Caco-2 (cell line): ENCODE measurements at regions of chr7 and their contacts with region 1.

Region 1: GRCh38 chr7:48337012-48337621 is 165.9 kb downstream of the ABCA13 start:
- DNase-seq: peak in 1 of 2 experiments; percentile 33
- H3K4me3 ChIP-seq: no peak overlapping the region
- H3K4me3 Mint-ChIP-seq: no peak overlapping the region
- H3K27ac Mint-ChIP-seq: no peak overlapping the region
- H3K4me1 ChIP-seq: no peaks in the 10 kb centered on the region
- H3K4me1 Mint-ChIP-seq: no peaks in the 10 kb centered on the region
- H3K27me3 ChIP-seq: no peaks in the 10 kb centered on the region
- H3K27me3 Mint-ChIP-seq: peaks cover 14% of the 10 kb centered on the region
- CTCF ChIP-seq: peak; percentile 53 to 77

Region 2: GRCh38 chr7:48321319-48322010 is 15.7 kb before region 1 on chr7:
- CTCF ChIA-PET with region 1: no interaction called
- POLR2A ChIA-PET with region 1: no interaction called
- intact Hi-C with region 1: no loop called
- DNase-seq: no peak
- H3K4me3 ChIP-seq: no peak overlapping the region
- H3K4me3 Mint-ChIP-seq: no peak overlapping the region
- H3K27ac Mint-ChIP-seq: no peak overlapping the region
- H3K4me1 ChIP-seq: no peaks in the 10 kb centered on the region
- H3K4me1 Mint-ChIP-seq: no peaks in the 10 kb centered on the region
- H3K27me3 ChIP-seq: no peaks in the 10 kb centered on the region; the same call in 1 of the 2 replicates
- H3K27me3 Mint-ChIP-seq: peaks cover 6% of the 10 kb centered on the region
- CTCF ChIP-seq: no peak

Region 3: GRCh38 chr7:48411619-48412018 is 74.5 kb after region 1 on chr7:
- CTCF ChIA-PET with region 1: no interaction called
- POLR2A ChIA-PET with region 1: no interaction called
- intact Hi-C with region 1: loop called (anchors 10 kb)
- DNase-seq: no peak
- H3K4me3 ChIP-seq: no peak overlapping the region
- H3K4me3 Mint-ChIP-seq: no peak overlapping the region
- H3K27ac Mint-ChIP-seq: no peak overlapping the region
- H3K4me1 ChIP-seq: no peaks in the 10 kb centered on the region
- H3K4me1 Mint-ChIP-seq: no peaks in the 10 kb centered on the region
- H3K27me3 ChIP-seq: no peaks in the 10 kb centered on the region
- H3K27me3 Mint-ChIP-seq: peaks cover 22% of the 10 kb centered on the region
- CTCF ChIP-seq: no peak

Region 4: GRCh38 chr7:48528646-48529045 is 191.5 kb after region 1 on chr7:
- CTCF ChIA-PET with region 1: no interaction called
- POLR2A ChIA-PET with region 1: no interaction called
- intact Hi-C with region 1: loop called (anchors 1 kb)
- DNase-seq: peak; percentile 23 to 48
- H3K4me3 ChIP-seq: no peak overlapping the region
- H3K4me3 Mint-ChIP-seq: no peak overlapping the region
- H3K27ac Mint-ChIP-seq: no peak overlapping the region
- H3K4me1 ChIP-seq: no peaks in the 10 kb centered on the region
- H3K4me1 Mint-ChIP-seq: no peaks in the 10 kb centered on the region
- H3K27me3 ChIP-seq: no peaks in the 10 kb centered on the region
- H3K27me3 Mint-ChIP-seq: peaks cover 5% of the 10 kb centered on the region
- CTCF ChIP-seq: peak in 1 of 2 experiments; percentile 22

Region 5: GRCh38 chr7:48718731-48719387 is 381.7 kb after region 1 on chr7:
- CTCF ChIA-PET with region 1: no interaction called
- POLR2A ChIA-PET with region 1: no interaction called
- intact Hi-C with region 1: no loop called
- DNase-seq: no peak
- H3K4me3 ChIP-seq: no peak overlapping the region
- H3K4me3 Mint-ChIP-seq: no peak overlapping the region
- H3K27ac Mint-ChIP-seq: no peak overlapping the region
- H3K4me1 ChIP-seq: peaks cover 12% of the 10 kb centered on the region
- H3K4me1 Mint-ChIP-seq: peaks cover 10% of the 10 kb centered on the region
- H3K27me3 ChIP-seq: no peaks in the 10 kb centered on the region
- H3K27me3 Mint-ChIP-seq: no peaks in the 10 kb centered on the region
- CTCF ChIP-seq: no peak